Posterior vena cava (tissue), 2 donors: ENCODE measurements at regions of chr1 and their contacts with region 1.

Region 1: DNA sequence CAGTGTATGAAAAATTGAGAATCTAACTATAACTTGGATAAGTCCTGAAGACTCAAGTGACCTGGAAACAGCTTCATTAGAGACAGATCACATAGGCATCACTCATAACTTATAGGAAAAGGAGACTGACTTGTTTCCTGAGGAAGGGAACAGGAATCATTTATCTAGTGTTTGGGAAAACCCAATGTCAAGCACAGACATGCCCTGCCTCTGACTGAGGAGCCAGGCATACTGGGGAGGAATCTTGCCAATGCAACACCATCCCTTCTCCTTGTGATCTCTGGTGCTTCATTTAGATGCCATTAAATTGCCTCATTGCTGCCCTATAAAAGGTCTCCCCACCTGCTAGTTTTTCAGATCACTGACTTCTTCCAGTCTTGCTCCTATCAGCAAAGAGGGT is 10.3 kb downstream of the LCE4A start:
- DNase-seq: no peak

Region 2: GRCh38 chr1:152761356-152762213 is 43.3 kb after region 1 on chr1:
- intact Hi-C with region 1: loop called in 1 of 2 experiments (anchors 1 kb)
- DNase-seq: no peak

Region 3: DNA sequence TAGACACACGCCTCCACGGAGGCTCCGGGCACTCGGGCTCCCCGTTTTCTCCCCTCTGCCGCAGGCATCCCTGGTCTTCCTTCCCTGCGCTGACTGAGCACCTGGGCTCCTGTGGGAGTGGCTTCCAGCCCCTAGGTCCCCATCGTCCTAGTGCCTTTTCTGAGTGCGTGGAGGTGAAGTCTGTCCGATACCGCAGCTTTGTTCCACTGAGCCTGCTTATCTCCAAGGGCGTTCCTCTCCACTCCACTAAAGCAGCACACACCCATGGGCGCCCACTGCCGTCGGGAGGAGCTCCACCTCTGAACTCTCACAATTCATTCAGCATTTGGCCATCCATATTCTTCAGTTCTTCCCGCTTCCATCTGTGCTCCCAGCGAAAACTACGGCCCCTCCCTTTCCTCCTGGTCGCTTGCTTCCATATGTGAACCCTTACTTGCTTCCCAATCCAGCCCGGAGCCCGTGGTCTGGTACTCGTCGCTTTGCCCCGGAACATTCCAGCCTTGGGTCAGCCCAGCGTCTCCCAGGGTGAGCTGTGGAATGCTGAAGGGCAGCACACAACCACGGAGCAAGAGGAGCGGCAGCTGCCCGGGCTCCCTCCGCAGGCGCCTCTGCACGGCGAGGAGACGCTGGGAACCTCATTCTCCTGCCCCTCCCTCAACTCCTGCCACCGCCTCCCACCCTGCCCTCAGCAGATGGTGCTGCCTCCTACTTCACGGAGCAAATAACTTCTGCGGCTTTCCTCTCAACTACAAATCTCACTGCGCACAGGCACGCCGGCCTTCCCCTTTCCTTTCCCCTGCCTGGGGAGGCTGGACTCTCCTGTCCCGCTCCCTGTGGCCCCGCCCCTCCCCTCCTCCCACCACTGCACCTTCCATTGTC is 1634.6 kb after region 1 on chr1:
- intact Hi-C with region 1: no loop called
- DNase-seq: peak; percentile 86